Cardiac septum (tissue), 1 donor: ENCODE measurements at regions of chr2 and their contacts with region 1.

Region 1: DNA sequence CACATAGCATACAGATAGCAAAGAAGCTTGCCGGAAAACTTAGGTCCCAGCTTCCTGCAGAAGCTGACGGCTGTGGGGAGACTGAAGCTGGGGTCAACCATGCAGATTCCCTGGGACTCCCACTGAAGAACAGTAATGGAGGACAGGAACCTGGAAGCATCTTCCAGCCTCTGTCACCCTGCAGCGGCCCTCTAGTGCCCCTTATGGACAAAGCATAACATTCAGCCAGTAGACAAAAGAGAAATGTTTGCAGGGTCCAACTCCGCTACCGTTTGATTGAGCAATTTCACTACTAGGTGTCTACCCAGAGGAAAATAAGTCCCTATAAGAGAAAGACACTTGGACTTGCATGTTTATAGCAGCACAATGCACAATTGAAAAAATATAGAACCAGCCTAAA is 460.6 kb downstream of the CNTNAP5 start:
- DNase-seq: no peak

Region 2: DNA sequence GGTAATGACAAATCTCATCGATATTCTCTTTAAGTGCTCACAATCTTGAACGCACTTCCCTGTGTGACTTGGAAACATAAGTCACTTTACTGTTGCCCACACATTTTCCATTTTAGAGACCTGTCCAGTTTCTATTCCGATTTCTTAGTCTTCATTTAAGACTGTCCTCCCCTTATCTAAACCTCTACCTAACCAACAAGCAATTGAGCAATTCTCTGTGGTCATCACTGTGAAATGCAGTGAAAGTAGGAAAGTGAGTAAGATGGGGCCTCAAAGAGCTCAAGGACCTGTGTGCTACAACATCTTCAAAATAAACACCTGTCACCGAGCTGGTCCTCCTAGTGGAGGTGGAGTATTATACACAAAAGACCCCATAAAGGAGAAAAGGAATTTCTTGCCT is 276.2 kb before region 1 on chr2:
- intact Hi-C with region 1: no loop called
- DNase-seq: no peak

Region 3: GRCh38 chr2:124683536-124684428 is 198.1 kb after region 1 on chr2:
- intact Hi-C with region 1: loop called (anchors 10 kb)
- DNase-seq: no peak